Activated naive CD4-positive, alpha-beta T cell treated with anti-CD3 and anti-CD28 coated beads for 36 hours (primary cell): ENCODE measurements at regions of chr6 and their contacts with region 1.

Region 1: GRCh38 chr6:110815217-110816109 is at the start of gene CDK19:
- DNase-seq: peak; percentile 99
- H3K4me3 Mint-ChIP-seq: peak within 1 kb of the TSS; percentile 100
- H3K27ac Mint-ChIP-seq: peak within 1 kb of the TSS; percentile 95
- H3K4me1 Mint-ChIP-seq: peaks cover 19% of the 10 kb centered on the region
- H3K27me3 Mint-ChIP-seq: no peaks in the 10 kb centered on the region
- total RNA-seq, gene CDK19: 11.0 to 11.7 TPM

Region 2: DNA sequence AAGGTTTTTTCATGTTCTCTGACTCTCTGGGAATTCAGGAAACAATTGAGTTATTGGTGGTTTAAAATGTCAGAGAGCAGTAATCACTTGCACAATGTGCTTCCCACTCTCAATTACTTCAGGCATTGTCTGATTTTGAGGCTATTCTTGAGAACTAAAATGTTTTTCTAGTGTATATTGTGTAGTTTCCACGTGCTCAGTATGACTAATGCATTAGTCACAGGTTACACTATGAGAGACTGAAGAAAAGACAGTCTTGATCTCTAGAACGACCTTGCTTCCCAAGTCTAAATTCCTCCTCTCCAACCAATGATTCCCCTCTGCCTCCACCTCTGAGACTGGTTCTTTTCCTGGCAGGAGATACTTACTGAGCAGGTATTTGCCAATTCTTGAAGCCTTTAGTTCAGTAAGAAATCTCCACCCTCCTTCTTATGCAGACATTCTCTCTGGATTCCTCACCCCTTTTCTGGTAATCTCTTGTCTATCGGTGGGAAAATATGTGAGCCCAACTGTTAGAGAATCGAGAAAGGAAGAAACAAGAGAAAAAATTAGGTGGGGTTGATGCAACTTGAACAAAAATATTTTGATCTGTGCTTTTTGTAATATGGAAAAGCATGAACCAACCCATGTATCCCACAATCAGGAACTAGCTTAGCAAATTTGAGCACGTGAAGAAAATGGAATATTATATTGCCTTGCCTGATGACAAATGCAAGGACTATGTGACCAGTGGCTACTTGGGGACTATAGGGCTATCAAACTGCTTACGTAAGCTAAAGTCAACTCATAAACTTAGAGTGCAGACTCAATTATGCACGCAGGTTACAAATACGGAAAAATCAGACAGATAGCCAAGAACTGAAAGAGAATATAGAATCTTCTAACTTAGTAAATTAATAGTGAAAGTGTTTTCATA is 278.0 kb before region 1 on chr6:
- CTCF ChIA-PET with region 1: no interaction called
- intact Hi-C with region 1: loop called (anchors 1 kb)
- DNase-seq: no peak
- H3K4me3 Mint-ChIP-seq: no peak overlapping the region
- H3K27ac Mint-ChIP-seq: no peak overlapping the region
- H3K4me1 Mint-ChIP-seq: peaks cover 19% of the 10 kb centered on the region
- H3K27me3 Mint-ChIP-seq: no peaks in the 10 kb centered on the region

Region 3: GRCh38 chr6:110841266-110841665 is 25.8 kb after region 1 on chr6:
- CTCF ChIA-PET with region 1: no interaction called
- intact Hi-C with region 1: no loop called
- DNase-seq: no peak
- H3K4me3 Mint-ChIP-seq: no peak overlapping the region
- H3K27ac Mint-ChIP-seq: no peak overlapping the region
- H3K4me1 Mint-ChIP-seq: no peaks in the 10 kb centered on the region
- H3K27me3 Mint-ChIP-seq: no peaks in the 10 kb centered on the region

Region 4: DNA sequence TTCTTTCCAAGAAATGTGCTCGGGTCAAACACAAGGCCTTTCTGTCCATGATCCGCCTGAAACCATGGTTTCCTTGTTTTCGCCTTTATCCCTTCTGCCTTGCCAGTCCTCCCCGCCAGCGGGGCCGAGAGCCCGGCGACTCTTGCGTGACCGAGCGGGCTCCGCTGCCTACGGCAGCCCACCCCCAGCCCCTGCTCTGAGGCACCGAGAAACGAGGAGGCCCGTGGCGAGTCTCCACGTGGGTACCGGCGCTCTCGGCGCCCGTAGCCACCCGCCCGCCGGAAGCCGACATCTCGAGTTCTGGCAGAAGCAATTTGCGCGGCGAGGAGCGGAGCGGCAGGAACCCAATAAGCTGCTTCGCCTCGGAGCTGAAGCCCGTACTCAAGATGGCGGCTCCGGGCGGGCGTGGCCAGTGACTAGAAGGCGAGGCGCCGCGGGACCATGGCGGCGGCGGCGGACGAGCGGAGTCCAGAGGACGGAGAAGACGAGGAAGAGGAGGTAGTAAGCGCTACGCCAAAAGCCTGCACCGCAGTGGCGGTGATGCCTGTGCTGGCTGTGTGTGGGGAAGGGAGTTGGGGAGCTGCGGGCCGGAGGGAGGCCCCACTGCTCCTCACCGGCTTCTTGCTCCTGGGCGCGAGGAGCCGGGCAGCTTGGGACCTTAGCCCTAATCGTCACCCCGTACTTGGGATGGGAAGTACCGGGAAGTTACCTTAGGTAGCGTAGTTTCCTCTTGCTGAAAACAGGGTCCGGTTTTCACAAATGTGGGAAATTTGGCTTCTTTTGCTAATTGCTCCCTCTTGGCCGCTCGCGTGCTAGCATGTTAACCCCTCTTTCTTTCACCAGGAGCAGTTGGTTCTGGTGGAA is 143.1 kb after region 1 on chr6 and contains the start of gene GTF3C6:
- CTCF ChIA-PET with region 1: interaction called, 3 read pairs
- intact Hi-C with region 1: loop called (anchors 1 kb)
- DNase-seq: peak; percentile 94
- H3K4me3 Mint-ChIP-seq: peak within 1 kb of the TSS; percentile 94
- H3K27ac Mint-ChIP-seq: peak within 1 kb of the TSS; percentile 96
- H3K4me1 Mint-ChIP-seq: peaks cover 14% of the 10 kb centered on the region
- H3K27me3 Mint-ChIP-seq: no peaks in the 10 kb centered on the region
- total RNA-seq, gene GTF3C6: 81.6 to 84.7 TPM

Region 5: DNA sequence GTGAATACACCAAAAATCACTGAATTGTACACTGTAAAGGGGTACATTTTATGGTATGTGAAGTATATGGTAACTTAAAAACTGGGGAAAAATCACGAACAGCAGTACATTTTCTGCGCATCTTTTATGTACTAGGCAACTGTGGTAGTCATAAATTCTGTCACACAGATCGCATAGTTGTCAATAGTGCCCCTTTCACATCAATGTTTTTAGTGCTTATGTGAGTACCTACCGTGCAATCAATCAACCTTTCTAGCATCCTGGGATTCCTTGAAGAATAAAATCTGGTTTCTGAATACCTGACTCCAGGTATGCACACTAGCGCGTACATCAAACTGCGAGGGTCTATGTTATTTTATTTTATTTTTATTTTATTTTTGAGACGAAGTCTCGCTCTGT is 165.7 kb after region 1 on chr6:
- CTCF ChIA-PET with region 1: no interaction called
- intact Hi-C with region 1: loop called (anchors 1 kb)
- DNase-seq: no peak
- H3K4me3 Mint-ChIP-seq: peak overlapping the region; percentile 96
- H3K27ac Mint-ChIP-seq: peak overlapping the region; percentile 96
- H3K4me1 Mint-ChIP-seq: peaks cover 38% of the 10 kb centered on the region
- H3K27me3 Mint-ChIP-seq: no peaks in the 10 kb centered on the region

Region 6: DNA sequence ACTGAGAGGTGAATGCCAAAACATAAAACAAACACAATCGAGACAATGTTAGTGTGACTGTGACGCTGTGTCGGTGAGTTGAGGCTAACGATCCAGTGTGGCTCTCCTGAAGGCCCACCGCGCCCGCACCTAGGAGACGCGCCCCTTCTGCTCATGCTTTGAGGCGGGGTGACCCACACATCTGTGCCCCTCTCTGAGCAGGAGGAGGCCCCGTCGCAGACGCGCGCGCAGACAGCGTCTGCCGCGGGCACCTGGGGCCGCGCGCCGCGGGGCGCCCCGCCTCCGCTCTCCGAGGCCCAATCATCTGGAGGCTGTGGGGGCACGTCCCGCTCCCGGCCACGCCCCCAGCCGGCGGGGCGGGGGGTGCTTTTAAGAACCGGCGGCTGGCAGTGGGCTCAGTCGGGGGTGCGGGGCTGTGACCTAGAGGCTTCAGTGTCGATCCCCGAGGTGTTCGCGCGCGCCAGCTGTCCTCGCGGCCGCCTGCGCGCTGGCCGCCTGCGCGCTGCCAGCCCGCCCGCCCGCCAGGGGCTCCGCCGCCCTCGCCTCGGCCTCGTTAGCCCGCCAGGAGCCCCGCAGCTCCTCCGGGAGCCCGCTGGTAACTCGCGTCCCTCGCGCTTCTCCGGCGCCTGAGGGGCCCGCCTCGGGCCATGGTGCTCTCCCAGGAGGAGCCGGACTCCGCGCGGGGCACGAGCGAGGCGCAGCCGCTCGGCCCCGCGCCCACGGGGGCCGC is 271.8 kb after region 1 on chr6 and contains the start of gene SLC16A10:
- CTCF ChIA-PET with region 1: no interaction called
- intact Hi-C with region 1: loop called (anchors 2 kb)
- DNase-seq: peak; percentile 74
- H3K4me3 Mint-ChIP-seq: peak within 1 kb of the TSS; percentile 89
- H3K27ac Mint-ChIP-seq: peak within 1 kb of the TSS; percentile 76
- H3K4me1 Mint-ChIP-seq: peaks cover 36% of the 10 kb centered on the region
- H3K27me3 Mint-ChIP-seq: no peaks in the 10 kb centered on the region
- total RNA-seq, gene SLC16A10: 6.6 to 8.1 TPM